Activated CD4-positive, alpha-beta T cell treated with anti-CD3 and anti-CD28 coated beads, Interleukin-2, amount 10 ng/mL, durations not matched to agents 24 days and 14 days (primary cell): ENCODE measurements at regions of chr21 and their contacts with region 1.

Region 1: GRCh38 chr21:42002421-42002958 is 7.7 kb downstream of the ZBTB21 start:
- DNase-seq: peak; percentile 91
- H3K4me3 Mint-ChIP-seq: peak overlapping the region; percentile 33
- H3K27ac Mint-ChIP-seq: peak overlapping the region; percentile 94
- H3K4me1 Mint-ChIP-seq: peaks cover 52% of the 10 kb centered on the region
- H3K27me3 Mint-ChIP-seq: peaks cover 2% of the 10 kb centered on the region

Region 2: GRCh38 chr21:41361786-41362604 is 640.5 kb before region 1 on chr21 and contains the start of gene MX2:
- intact Hi-C with region 1: loop called (anchors 5 kb)
- DNase-seq: peak; percentile 95
- H3K4me3 Mint-ChIP-seq: peak within 1 kb of the TSS; percentile 89
- H3K27ac Mint-ChIP-seq: peak within 1 kb of the TSS; percentile 95
- H3K4me1 Mint-ChIP-seq: peaks cover 54% of the 10 kb centered on the region
- H3K27me3 Mint-ChIP-seq: peaks cover 2% of the 10 kb centered on the region
- total RNA-seq, gene MX2: 8.6 and 11.5 TPM in 2 replicates

Region 3: GRCh38 chr21:41879190-41879998 is 123.1 kb before region 1 on chr21 and contains the start of gene PRDM15:
- intact Hi-C with region 1: loop called (anchors 2 kb)
- DNase-seq: peak; percentile 95
- H3K4me3 Mint-ChIP-seq: peak within 1 kb of the TSS; percentile 91
- H3K27ac Mint-ChIP-seq: peak within 1 kb of the TSS; percentile 98
- H3K4me1 Mint-ChIP-seq: peaks cover 21% of the 10 kb centered on the region
- H3K27me3 Mint-ChIP-seq: no peaks in the 10 kb centered on the region
- total RNA-seq, gene PRDM15: 18.6 and 19.1 TPM in 2 replicates

Region 4: DNA sequence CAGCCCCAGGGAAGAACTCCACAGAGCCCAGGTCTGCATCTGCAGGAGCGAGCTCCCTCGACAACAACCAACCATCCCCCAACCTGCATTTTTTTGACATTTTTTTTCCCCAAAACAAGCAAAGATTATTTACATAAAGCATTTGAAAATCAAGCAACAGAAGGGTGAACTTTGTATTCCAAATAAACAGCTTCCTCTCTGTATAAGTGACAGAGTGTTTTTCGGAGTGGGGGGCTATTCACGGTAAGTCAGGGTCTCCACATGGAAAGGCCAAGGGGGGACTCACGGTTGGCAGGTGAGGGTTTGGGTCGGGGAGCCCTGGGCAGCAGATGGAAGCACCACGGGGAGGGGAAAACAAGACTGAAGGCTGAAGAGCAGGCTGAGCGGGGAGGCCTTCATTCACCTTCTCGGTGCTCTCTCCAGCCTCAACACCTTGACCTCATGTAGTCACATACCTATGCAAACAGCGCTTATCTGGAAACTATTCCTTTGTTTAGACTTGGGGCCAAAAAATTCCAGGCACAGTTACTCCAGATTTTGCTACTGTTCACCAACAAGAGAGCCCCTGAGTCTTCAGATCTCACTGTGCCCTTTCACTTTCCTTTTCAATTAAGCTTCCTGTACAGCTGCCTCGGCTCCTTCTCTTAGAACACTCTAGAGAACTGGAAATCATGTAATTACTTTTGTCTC is 76.2 kb before region 1 on chr21:
- intact Hi-C with region 1: loop called (anchors 2 kb)
- DNase-seq: peak; percentile 84
- H3K4me3 Mint-ChIP-seq: peak overlapping the region; percentile 90
- H3K27ac Mint-ChIP-seq: peak overlapping the region; percentile 96
- H3K4me1 Mint-ChIP-seq: peaks cover 53% of the 10 kb centered on the region
- H3K27me3 Mint-ChIP-seq: no peaks in the 10 kb centered on the region

Region 5: GRCh38 chr21:42040411-42041180 is 38.1 kb after region 1 on chr21:
- intact Hi-C with region 1: no loop called
- DNase-seq: no peak
- H3K4me3 Mint-ChIP-seq: no peak overlapping the region
- H3K27ac Mint-ChIP-seq: no peak overlapping the region
- H3K4me1 Mint-ChIP-seq: no peaks in the 10 kb centered on the region
- H3K27me3 Mint-ChIP-seq: peaks cover 6% of the 10 kb centered on the region

Region 6: GRCh38 chr21:42062236-42063022 is 59.9 kb after region 1 on chr21:
- intact Hi-C with region 1: loop called (anchors 2 kb)
- DNase-seq: peak; percentile 93
- H3K4me3 Mint-ChIP-seq: peak overlapping the region; percentile 79
- H3K27ac Mint-ChIP-seq: peak overlapping the region; percentile 85
- H3K4me1 Mint-ChIP-seq: peaks cover 39% of the 10 kb centered on the region
- H3K27me3 Mint-ChIP-seq: no peaks in the 10 kb centered on the region

Region 7: GRCh38 chr21:42400525-42400924 is 398.0 kb after region 1 on chr21:
- intact Hi-C with region 1: loop called (anchors 2 kb)
- DNase-seq: peak; percentile 76
- H3K4me3 Mint-ChIP-seq: peak overlapping the region; percentile 63
- H3K27ac Mint-ChIP-seq: peak overlapping the region; percentile 74
- H3K4me1 Mint-ChIP-seq: peaks cover 48% of the 10 kb centered on the region
- H3K27me3 Mint-ChIP-seq: no peaks in the 10 kb centered on the region